ENCODE measurements at regions of chr12 and their contacts with region 1.

Region 1: GRCh38 chr12:122123051-122123760 is 44.6 kb downstream of the MLXIP start:
- DNase-seq: peak; percentile 78
- H3K4me3 ChIP-seq: no peak overlapping the region
- H3K27ac ChIP-seq: no peak overlapping the region
- H3K4me1 ChIP-seq: peaks cover 7% of the 10 kb centered on the region
- CTCF ChIP-seq: peak; percentile 94

Region 2: GRCh38 chr12:121871467-121871866 is 251.7 kb before region 1 on chr12:
- CTCF ChIA-PET with region 1: no interaction called
- POLR2A ChIA-PET with region 1: no interaction called
- intact Hi-C with region 1: no loop called
- DNase-seq: no peak
- H3K4me3 ChIP-seq: no peak overlapping the region
- H3K27ac ChIP-seq: no peak overlapping the region
- H3K4me1 ChIP-seq: no peaks in the 10 kb centered on the region
- CTCF ChIP-seq: no peak

Region 3: DNA sequence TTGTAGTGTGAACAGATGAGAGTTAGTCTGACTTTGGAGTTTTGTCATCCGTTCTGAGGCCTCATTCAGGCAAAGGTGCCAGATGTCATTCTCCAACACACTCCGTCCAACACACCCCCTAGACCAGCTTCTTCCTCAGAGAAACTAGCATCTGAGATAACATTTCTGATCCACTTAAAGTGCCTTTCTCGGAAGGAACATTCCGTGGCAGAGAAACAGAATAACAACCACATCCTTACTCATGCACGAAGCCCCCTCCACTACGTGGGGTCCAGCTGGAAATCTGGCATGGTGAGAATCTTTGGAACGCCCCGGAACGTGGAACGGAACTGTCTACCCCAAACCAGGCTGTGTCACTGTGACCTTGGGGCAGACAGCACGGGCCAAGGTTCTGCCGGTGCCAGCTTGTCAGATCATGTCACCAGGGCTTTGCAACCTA is 118.6 kb before region 1 on chr12:
- CTCF ChIA-PET with region 1: no interaction called
- POLR2A ChIA-PET with region 1: no interaction called
- intact Hi-C with region 1: no loop called
- DNase-seq: no peak
- H3K4me3 ChIP-seq: peak overlapping the region; percentile 78
- H3K27ac ChIP-seq: peak overlapping the region; percentile 100
- H3K4me1 ChIP-seq: peaks cover 86% of the 10 kb centered on the region
- CTCF ChIP-seq: no peak

Region 4: GRCh38 chr12:122051231-122051876 is 71.9 kb before region 1 on chr12:
- CTCF ChIA-PET with region 1: no interaction called
- POLR2A ChIA-PET with region 1: no interaction called
- intact Hi-C with region 1: loop called (anchors 1 kb)
- DNase-seq: no peak
- H3K4me3 ChIP-seq: no peak overlapping the region
- H3K27ac ChIP-seq: no peak overlapping the region
- H3K4me1 ChIP-seq: no peaks in the 10 kb centered on the region
- CTCF ChIP-seq: no peak

Region 5: DNA sequence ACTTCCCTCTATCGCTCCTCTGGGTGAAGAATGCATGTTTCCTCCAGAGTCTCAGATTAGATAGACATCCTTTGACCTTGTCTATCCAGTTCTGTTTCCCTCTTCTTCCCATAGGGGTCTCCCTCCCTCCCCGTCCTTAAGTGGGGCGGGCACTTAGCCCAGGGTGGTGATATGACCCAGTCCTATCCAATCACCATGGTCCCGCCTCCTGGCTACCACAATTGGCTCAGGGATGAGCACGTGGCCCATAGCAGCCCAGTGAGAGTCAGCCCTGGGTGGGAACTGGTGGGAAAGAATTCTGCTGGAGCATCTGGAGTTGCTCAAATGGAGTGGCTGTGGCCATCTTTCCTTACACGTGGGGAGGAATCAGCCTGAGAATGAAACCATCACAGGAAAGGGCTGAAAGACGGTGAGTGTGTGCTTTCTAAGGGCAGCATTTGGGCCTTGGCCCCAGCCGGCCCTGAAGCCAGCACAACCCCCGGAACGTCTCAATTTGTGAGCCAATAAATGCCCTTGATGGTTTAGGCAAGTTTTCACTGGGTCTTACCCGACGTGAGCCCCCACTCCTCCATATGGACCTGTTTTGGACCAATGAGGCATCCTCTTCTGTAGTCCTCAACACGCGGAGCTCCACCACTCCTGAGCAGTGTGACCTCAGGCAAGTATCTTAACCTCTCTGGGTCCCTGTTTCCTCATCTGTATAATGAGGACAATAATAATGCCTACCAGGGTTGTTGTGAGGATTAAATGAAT is 59.0 kb before region 1 on chr12:
- CTCF ChIA-PET with region 1: no interaction called
- POLR2A ChIA-PET with region 1: interaction called, 3 read pairs
- intact Hi-C with region 1: loop called (anchors 2 kb)
- DNase-seq: peak; percentile 85
- H3K4me3 ChIP-seq: no peak overlapping the region
- H3K27ac ChIP-seq: no peak overlapping the region
- H3K4me1 ChIP-seq: peaks cover 34% of the 10 kb centered on the region
- CTCF ChIP-seq: peak; percentile 77